ENCODE measurements at regions of chr1 and their contacts with region 1.

Region 1: GRCh38 chr1:178542560-178543356 is 29.8 kb downstream of the TEX35 start:
- DNase-seq: peak; percentile 71 to 100
- H3K4me3 ChIP-seq: peak overlapping the region; percentile 51 to 94 (median 90)
- H3K27ac ChIP-seq: peak overlapping the region; percentile 73; the same call in 1 of the 2 replicates
- H3K4me1 ChIP-seq: peaks cover 0 to 8% (median 3%) of the 10 kb centered on the region in 4 experiments; a peak in 2 of 7 replicates
- H3K27me3 ChIP-seq: no peaks in the 10 kb centered on the region
- CTCF ChIP-seq: peak; percentile 77 to 94 (median 92)
- EP300 ChIP-seq: no peak; a peak in 1 of 3 replicates
- POLR2A ChIP-seq: no peak; a peak in 1 of 3 replicates
- RAD21 ChIP-seq: peak; percentile 82 to 88

Region 2: GRCh38 chr1:178552856-178553255 is 10.1 kb after region 1 on chr1:
- CTCF ChIA-PET with region 1: interaction called, 12 read pairs
- POLR2A ChIA-PET with region 1: interaction called, 4 read pairs
- DNase-seq: no peak
- H3K4me3 ChIP-seq: no peak overlapping the region
- H3K27ac ChIP-seq: no peak overlapping the region
- H3K4me1 ChIP-seq: no peaks in the 10 kb centered on the region
- H3K27me3 ChIP-seq: no peaks in the 10 kb centered on the region
- CTCF ChIP-seq: no peak
- EP300 ChIP-seq: no peak
- POLR2A ChIP-seq: no peak
- RAD21 ChIP-seq: no peak

Region 3: DNA sequence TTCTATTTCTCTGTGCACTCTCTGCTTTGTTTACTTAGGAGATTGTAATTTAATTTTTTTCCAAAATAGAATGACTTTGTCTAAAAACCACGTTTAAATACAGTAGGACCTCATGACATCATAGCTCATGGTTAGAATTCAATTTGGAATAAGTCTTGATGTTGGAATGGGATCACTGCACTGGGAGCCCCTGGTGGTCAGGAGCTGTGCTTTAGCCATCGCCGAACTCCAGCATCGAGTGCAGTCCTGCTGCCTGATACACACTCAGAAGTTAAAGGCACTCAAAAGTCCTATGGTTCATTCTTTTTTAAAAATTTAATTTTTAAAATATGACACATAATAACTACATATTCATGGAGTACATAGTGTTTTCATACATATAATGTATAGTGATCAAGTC is 45.2 kb after region 1 on chr1:
- CTCF ChIA-PET with region 1: interaction called, 15 read pairs
- POLR2A ChIA-PET with region 1: no interaction called
- DNase-seq: no peak
- H3K4me3 ChIP-seq: no peak overlapping the region
- H3K27ac ChIP-seq: no peak overlapping the region
- H3K4me1 ChIP-seq: no peaks in the 10 kb centered on the region
- H3K27me3 ChIP-seq: peaks cover 3 to 10% (median 5%) of the 10 kb centered on the region in 4 experiments; a peak in 6 of 7 replicates
- CTCF ChIP-seq: peak; percentile 8 to 54 (median 35); a peak in 3 of 4 replicates
- EP300 ChIP-seq: no peak
- POLR2A ChIP-seq: no peak
- RAD21 ChIP-seq: peak in 1 of 2 experiments; percentile 19; a peak in 1 of 4 replicates

Region 4: DNA sequence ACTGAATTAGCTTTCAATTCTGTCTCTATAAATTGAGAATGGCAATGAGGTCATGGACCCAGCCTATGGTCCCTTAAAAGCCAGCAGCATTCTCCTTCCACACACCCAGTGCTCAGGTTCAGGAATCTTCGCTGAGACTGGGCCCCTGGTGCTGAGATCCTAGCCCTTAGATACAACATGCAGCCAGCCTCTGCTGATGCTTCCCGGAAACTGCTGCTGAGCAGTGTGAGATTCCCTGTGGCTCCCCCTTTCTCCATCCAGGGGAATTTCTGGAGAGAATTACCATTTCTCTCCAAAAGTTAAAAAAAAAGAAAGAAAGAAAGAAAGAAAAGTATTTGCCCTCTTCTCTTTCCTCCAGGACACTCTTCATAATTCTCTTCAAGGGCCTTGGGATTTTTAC is 150.6 kb after region 1 on chr1:
- CTCF ChIA-PET with region 1: interaction called, 11 read pairs
- POLR2A ChIA-PET with region 1: no interaction called
- DNase-seq: peak in 1 of 2 experiments; percentile 27
- H3K4me3 ChIP-seq: no peak overlapping the region
- H3K27ac ChIP-seq: no peak overlapping the region
- H3K4me1 ChIP-seq: no peaks in the 10 kb centered on the region
- H3K27me3 ChIP-seq: no peaks in the 10 kb centered on the region
- CTCF ChIP-seq: peak; percentile 35 to 56 (median 50)
- EP300 ChIP-seq: no peak
- POLR2A ChIP-seq: no peak
- RAD21 ChIP-seq: peak; percentile 45 to 54

Region 5: DNA sequence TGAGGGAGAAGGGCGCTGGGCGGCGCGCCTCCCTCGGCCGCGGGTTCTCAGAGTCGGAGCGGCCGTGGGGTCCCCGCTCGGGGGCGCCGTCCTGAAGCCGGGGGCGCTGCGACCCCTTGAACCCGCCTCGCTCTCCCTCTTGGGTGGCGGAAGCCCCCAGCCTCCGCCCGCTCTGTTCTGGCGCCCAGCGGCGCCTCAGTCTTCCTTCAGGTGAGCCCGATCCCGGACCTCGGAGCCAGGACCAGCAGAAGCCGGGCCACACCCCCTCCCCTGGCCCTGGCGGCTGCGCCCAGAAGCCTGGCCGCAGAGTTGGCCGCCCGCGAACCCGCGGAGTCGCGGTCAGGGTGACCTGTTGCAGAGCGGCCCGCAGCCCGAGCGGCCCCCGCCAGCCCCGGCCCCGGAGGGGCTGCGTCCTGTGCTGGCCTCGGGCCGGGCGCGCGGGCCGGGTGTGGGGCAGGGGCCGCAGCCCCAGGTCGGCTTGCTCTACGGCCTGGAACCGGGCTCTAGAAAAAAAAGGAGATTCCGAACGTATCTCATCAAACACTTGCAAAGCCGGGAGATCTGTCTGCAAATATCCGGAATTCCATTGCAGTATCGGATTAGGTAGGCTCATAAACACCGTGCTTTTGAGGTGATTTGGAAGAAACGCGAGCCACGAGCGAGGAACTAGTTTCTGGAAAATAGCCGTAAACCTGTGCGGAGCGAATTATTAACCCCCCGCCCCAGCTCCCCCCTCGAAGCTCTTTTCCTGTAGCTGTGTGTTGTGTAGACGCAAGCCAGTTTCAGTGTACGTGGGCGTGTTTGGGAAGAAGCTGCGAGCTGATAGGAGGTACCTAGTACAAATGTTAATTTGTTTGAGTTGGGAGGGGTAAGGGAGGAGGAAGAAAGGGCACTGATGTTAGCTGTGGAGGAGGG is 183.1 kb after region 1 on chr1:
- CTCF ChIA-PET with region 1: interaction called, 11 read pairs
- POLR2A ChIA-PET with region 1: interaction called, 21 read pairs
- DNase-seq: peak in 1 of 2 experiments; percentile 76
- H3K4me3 ChIP-seq: peak overlapping the region; percentile 63 to 89 (median 84)
- H3K27ac ChIP-seq: peak overlapping the region; percentile 83
- H3K4me1 ChIP-seq: peaks cover 0 to 4% (median 3%) of the 10 kb centered on the region in 4 experiments; a peak in 5 of 7 replicates
- H3K27me3 ChIP-seq: no peaks in the 10 kb centered on the region
- CTCF ChIP-seq: peak in 1 of 3 experiments; percentile 20; a peak in 1 of 4 replicates
- EP300 ChIP-seq: no peak
- POLR2A ChIP-seq: peak in 1 of 2 experiments; percentile 49; a peak in 2 of 3 replicates
- RAD21 ChIP-seq: no peak; a peak in 1 of 4 replicates